ENCODE measurements at regions of chr5 and their contacts with region 1.

Region 1: DNA sequence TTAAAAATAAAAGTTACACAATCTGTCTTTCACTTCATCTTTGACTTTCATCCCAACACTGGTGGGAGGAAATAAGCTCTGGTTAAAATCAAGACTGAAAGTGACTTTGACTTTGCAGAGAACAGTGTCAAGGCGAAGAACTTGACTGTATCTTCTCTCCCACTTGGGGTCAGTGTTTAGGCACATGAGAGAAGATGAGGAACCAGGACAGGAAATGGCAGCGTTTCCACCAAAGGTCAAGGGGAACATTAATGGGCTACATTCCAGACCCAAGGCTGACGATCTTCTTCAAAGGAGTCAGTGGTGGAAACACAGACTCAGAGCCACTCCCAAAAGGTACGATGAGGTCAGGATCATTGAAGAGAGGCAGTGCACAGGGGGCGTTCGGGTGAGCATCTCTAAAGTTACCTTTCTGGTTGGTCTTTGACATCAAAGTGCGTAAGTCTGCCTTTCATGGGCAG is 409.6 kb downstream of the ARHGEF28 start:
- DNase-seq: peak; percentile 63 to 71
- H3K4me3 ChIP-seq: no peak overlapping the region
- H3K4me3 Mint-ChIP-seq: no peak overlapping the region
- H3K27ac Mint-ChIP-seq: no peak overlapping the region
- H3K4me1 ChIP-seq: 0 out of 2 replicates have a peak, but pooled peaks cover 5% of the 10 kb centered on the region
- H3K4me1 Mint-ChIP-seq: peaks cover 7% of the 10 kb centered on the region
- H3K27me3 ChIP-seq: no peaks in the 10 kb centered on the region
- H3K27me3 Mint-ChIP-seq: no peaks in the 10 kb centered on the region
- CTCF ChIP-seq: peak; percentile 40 to 46

Region 2: GRCh38 chr5:73902327-73903051 is 133.1 kb before region 1 on chr5:
- CTCF ChIA-PET with region 1: no interaction called
- POLR2A ChIA-PET with region 1: no interaction called
- intact Hi-C with region 1: loop called (anchors 5 kb)
- DNase-seq: peak in 1 of 2 experiments; percentile 42
- H3K4me3 ChIP-seq: no peak overlapping the region
- H3K4me3 Mint-ChIP-seq: no peak overlapping the region
- H3K27ac Mint-ChIP-seq: no peak overlapping the region
- H3K4me1 ChIP-seq: no peaks in the 10 kb centered on the region
- H3K4me1 Mint-ChIP-seq: no peaks in the 10 kb centered on the region
- H3K27me3 ChIP-seq: no peaks in the 10 kb centered on the region
- H3K27me3 Mint-ChIP-seq: no peaks in the 10 kb centered on the region
- CTCF ChIP-seq: peak; percentile 41 to 85

Region 3: GRCh38 chr5:74127381-74128320 is 92.1 kb after region 1 on chr5:
- CTCF ChIA-PET with region 1: no interaction called
- POLR2A ChIA-PET with region 1: no interaction called
- intact Hi-C with region 1: loop called (anchors 1 kb)
- DNase-seq: peak in 1 of 2 experiments; percentile 36
- H3K4me3 ChIP-seq: no peak overlapping the region
- H3K4me3 Mint-ChIP-seq: peak overlapping the region; percentile 32
- H3K27ac Mint-ChIP-seq: no peak overlapping the region
- H3K4me1 ChIP-seq: 0 out of 2 replicates have a peak, but pooled peaks cover 10% of the 10 kb centered on the region
- H3K4me1 Mint-ChIP-seq: peaks cover 8% of the 10 kb centered on the region
- H3K27me3 ChIP-seq: no peaks in the 10 kb centered on the region
- H3K27me3 Mint-ChIP-seq: peaks cover 2% of the 10 kb centered on the region
- CTCF ChIP-seq: peak; percentile 34 to 55

Region 4: GRCh38 chr5:74394916-74395781 is 359.6 kb after region 1 on chr5:
- CTCF ChIA-PET with region 1: no interaction called
- POLR2A ChIA-PET with region 1: no interaction called
- intact Hi-C with region 1: loop called (anchors 5 kb)
- DNase-seq: peak; percentile 81 to 91
- H3K4me3 ChIP-seq: no peak overlapping the region
- H3K4me3 Mint-ChIP-seq: no peak overlapping the region
- H3K27ac Mint-ChIP-seq: peak overlapping the region; percentile 83
- H3K4me1 ChIP-seq: peaks cover 47% of the 10 kb centered on the region
- H3K4me1 Mint-ChIP-seq: peaks cover 42% of the 10 kb centered on the region
- H3K27me3 ChIP-seq: no peaks in the 10 kb centered on the region
- H3K27me3 Mint-ChIP-seq: no peaks in the 10 kb centered on the region
- CTCF ChIP-seq: peak; percentile 36 to 51

Measured in Caco-2 (cell line).